ENCODE measurements at regions of chr2 and their contacts with region 1.

Region 1: GRCh38 chr2:98771721-98772524 is 41.0 kb upstream of the MGAT4A start:
- DNase-seq: peak; percentile 30 to 88 (median 80)
- H3K4me3 ChIP-seq: peak overlapping the region; percentile 54
- H3K4me3 Mint-ChIP-seq: peak overlapping the region; percentile 85 to 97 (median 93)
- H3K27ac ChIP-seq: peak overlapping the region; percentile 70
- H3K27ac Mint-ChIP-seq: peak overlapping the region; percentile 94 to 100 (median 98)
- H3K4me1 ChIP-seq: peaks cover 79% of the 10 kb centered on the region
- H3K4me1 Mint-ChIP-seq: peaks cover 73 to 90% (median 89%) of the 10 kb centered on the region in 3 donors
- H3K27me3 ChIP-seq: no peaks in the 10 kb centered on the region
- H3K27me3 Mint-ChIP-seq: peaks cover 0 to 2% of the 10 kb centered on the region in 2 donors

Region 2: DNA sequence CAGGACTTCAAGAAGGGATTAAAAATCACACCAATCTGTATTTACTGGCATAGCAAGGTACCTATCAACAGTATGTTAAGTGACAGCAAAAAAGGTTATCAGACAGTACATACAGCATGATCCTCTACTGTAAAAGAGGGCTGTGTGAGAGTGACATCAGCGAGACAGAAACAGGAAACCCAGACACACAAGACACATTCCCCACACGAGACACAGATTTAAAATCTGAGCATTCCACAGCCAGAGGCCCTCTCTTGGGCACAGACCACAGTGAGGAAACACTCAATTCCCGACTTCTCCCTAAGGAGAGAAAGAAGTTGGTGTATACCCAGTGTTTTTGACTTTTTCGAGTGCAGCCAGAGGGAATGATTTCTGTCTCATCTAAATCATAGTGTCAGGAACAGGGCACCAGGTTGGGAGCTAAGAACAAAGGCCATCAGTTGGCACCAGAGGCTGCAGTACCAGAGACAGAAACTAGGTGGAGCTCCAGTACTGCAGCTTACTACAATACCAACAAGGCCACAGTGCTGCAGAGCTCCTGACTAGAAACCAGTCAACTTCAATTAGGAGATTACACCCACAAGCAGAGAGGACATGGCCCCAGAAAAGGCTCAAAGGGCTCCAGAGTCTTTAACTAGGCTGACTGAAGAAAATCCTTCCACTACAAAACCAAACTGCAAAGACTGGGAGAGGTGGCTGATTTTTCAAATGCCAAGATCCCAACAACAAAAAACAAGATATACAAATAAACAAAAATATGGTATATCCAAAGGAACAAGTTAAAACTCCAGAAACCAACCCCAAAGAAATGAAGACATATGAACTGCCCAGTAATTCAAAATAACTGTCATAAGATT is 122.6 kb before region 1 on chr2:
- CTCF ChIA-PET with region 1: interaction called, 14 read pairs
- POLR2A ChIA-PET with region 1: interaction called, 8 read pairs
- DNase-seq: peak; percentile 70 to 82 (median 74)
- H3K4me3 ChIP-seq: no peak overlapping the region
- H3K4me3 Mint-ChIP-seq: peak overlapping the region; percentile 3 to 57 (median 12)
- H3K27ac ChIP-seq: no peak overlapping the region
- H3K27ac Mint-ChIP-seq: peak overlapping the region; percentile 55 to 98 (median 86)
- H3K4me1 ChIP-seq: peaks cover 44% of the 10 kb centered on the region
- H3K4me1 Mint-ChIP-seq: peaks cover 50 to 79% (median 57%) of the 10 kb centered on the region in 3 donors
- H3K27me3 ChIP-seq: no peaks in the 10 kb centered on the region
- H3K27me3 Mint-ChIP-seq: no peaks in the 10 kb centered on the region

Region 3: GRCh38 chr2:98664327-98664726 is 107.6 kb before region 1 on chr2:
- CTCF ChIA-PET with region 1: interaction called, 3 read pairs
- POLR2A ChIA-PET with region 1: interaction called, 19 read pairs
- DNase-seq: peak; percentile 17 to 82 (median 72)
- H3K4me3 ChIP-seq: peak overlapping the region; percentile 26
- H3K4me3 Mint-ChIP-seq: peak overlapping the region; percentile 79 to 94 (median 86)
- H3K27ac ChIP-seq: no peak overlapping the region
- H3K27ac Mint-ChIP-seq: peak overlapping the region; percentile 59 to 97 (median 91)
- H3K4me1 ChIP-seq: peaks cover 76% of the 10 kb centered on the region
- H3K4me1 Mint-ChIP-seq: peaks cover 64 to 90% (median 86%) of the 10 kb centered on the region in 3 donors
- H3K27me3 ChIP-seq: no peaks in the 10 kb centered on the region
- H3K27me3 Mint-ChIP-seq: no peaks in the 10 kb centered on the region

Region 4: DNA sequence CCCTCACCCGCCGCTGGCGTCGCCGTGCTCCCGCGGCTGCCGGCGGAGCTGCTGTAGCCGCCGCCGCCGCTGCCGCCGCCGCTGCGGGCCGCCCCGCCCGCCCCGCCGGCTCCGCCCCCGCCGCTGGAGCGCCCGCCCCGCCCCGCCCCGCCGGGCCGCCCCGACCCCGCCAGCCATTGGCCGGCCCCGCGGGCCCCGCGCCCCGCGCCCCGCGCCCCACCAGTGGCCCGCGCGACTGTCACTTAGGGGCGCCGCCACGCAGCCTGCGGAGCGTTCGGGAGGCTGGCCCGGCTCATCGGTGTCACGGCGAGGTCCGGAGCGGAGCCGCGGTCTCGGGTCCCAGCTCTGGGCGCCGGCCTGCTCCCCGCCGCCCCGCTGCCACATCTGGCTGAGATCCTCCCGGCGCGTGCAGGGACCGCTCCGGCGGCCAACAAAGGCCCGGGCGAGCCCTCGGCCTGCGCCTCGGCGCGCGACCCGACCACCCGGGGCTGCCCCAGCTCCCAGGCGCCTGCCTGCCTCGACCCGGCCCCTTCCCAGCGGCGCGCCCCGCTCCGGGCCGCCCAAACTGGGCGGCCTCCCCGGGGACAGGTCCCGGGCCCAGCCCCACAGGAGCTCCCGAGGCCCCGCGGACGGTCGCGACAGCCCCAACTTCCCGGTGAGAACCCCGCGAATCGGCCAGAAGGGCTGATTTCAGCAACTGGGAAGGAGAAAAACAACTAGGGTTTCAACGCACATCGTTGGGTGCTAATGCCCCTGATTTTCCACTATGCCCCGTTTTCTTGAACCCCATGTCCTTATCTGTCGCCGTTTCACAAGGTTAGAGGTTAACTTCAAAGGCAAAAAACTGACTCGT is 40.7 kb before region 1 on chr2 and contains the start of gene MGAT4A:
- CTCF ChIA-PET with region 1: interaction called, 33 read pairs
- POLR2A ChIA-PET with region 1: interaction called, 94 read pairs
- DNase-seq: peak; percentile 73 to 86 (median 81)
- H3K4me3 ChIP-seq: peak within 1 kb of the TSS; percentile 72
- H3K4me3 Mint-ChIP-seq: peak within 1 kb of the TSS; percentile 93 to 97 (median 95)
- H3K27ac ChIP-seq: peak within 1 kb of the TSS; percentile 81
- H3K27ac Mint-ChIP-seq: peak within 1 kb of the TSS; percentile 79 to 98 (median 95)
- H3K4me1 ChIP-seq: peaks cover 62% of the 10 kb centered on the region
- H3K4me1 Mint-ChIP-seq: peaks cover 64 to 76% (median 72%) of the 10 kb centered on the region in 3 donors
- H3K27me3 ChIP-seq: no peaks in the 10 kb centered on the region
- H3K27me3 Mint-ChIP-seq: no peaks in the 10 kb centered on the region
- total RNA-seq, gene MGAT4A: 65.2 to 66.8 TPM

Region 5: GRCh38 chr2:98743835-98744234 is 28.1 kb before region 1 on chr2:
- CTCF ChIA-PET with region 1: interaction called, 5 read pairs
- POLR2A ChIA-PET with region 1: interaction called, 11 read pairs
- DNase-seq: no peak
- H3K4me3 ChIP-seq: no peak overlapping the region
- H3K4me3 Mint-ChIP-seq: peak overlapping the region in 2 of 7 donors; percentile 15 to 16
- H3K27ac ChIP-seq: no peak overlapping the region
- H3K27ac Mint-ChIP-seq: peak overlapping the region in 4 of 8 donors; percentile 17 to 72 (median 54)
- H3K4me1 ChIP-seq: peaks cover 30% of the 10 kb centered on the region
- H3K4me1 Mint-ChIP-seq: peaks cover 36 to 76% (median 39%) of the 10 kb centered on the region in 3 donors
- H3K27me3 ChIP-seq: no peaks in the 10 kb centered on the region
- H3K27me3 Mint-ChIP-seq: no peaks in the 10 kb centered on the region

Region 6: GRCh38 chr2:98757904-98758421 is 14.0 kb before region 1 on chr2:
- CTCF ChIA-PET with region 1: interaction called, 23 read pairs
- POLR2A ChIA-PET with region 1: interaction called, 18 read pairs
- DNase-seq: peak; percentile 38 to 78 (median 66)
- H3K4me3 ChIP-seq: peak overlapping the region; percentile 51
- H3K4me3 Mint-ChIP-seq: peak overlapping the region; percentile 2 to 89 (median 79)
- H3K27ac ChIP-seq: peak overlapping the region; percentile 38
- H3K27ac Mint-ChIP-seq: peak overlapping the region; percentile 89 to 99 (median 96)
- H3K4me1 ChIP-seq: peaks cover 69% of the 10 kb centered on the region
- H3K4me1 Mint-ChIP-seq: peaks cover 54 to 89% (median 77%) of the 10 kb centered on the region in 3 donors
- H3K27me3 ChIP-seq: no peaks in the 10 kb centered on the region
- H3K27me3 Mint-ChIP-seq: no peaks in the 10 kb centered on the region

Region 7: DNA sequence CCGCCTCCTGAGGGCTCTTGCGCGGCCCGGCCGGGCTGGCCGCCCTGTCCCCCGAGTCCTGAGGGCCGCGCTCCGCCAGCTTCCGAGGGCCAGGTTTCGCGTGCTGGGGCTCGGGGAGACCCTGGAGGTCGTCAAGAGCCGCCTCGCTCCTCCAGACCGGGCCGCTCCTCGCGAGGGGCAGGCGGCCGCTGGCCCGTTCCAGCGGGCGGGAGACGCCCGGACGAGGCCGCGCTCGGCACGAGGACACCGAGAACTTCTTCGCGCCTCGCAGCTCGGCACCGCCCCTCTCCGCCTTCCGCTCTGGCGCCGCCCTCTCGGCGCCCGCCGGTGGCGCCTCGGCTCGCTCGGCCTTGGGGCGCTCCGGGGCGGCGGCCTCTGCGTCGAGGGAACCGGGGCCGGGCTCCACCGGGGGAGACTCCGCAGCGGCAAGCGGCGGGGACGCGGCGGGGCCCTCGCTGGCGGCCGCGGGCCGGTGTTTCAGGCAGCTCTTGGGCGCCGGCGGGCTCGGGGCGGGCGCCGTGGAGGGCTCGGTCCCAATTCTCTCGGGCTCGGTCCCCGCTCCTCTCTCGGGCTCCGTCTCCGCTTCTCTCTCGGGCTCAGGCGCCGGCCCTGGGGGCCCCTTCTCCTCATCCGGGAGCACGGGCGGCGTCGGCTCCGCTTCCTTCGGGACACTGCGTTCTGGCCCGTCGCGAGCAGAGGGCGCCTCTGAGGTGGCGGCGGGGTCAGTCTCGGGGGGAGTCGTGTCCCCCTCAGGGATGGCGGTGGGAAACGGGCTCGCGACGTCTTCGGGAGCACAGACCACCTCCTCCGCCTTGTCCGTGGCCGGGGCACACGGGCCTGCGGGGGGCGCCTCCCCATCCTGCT is 50.6 kb after region 1 on chr2:
- CTCF ChIA-PET with region 1: interaction called, 9 read pairs
- POLR2A ChIA-PET with region 1: interaction called, 12 read pairs
- DNase-seq: peak; percentile 39 to 71 (median 61)
- H3K4me3 ChIP-seq: no peak overlapping the region
- H3K4me3 Mint-ChIP-seq: peak overlapping the region in 3 of 7 donors; percentile 32 to 87 (median 41)
- H3K27ac ChIP-seq: no peak overlapping the region
- H3K27ac Mint-ChIP-seq: peak overlapping the region in 1 of 8 donors; percentile 33
- H3K4me1 ChIP-seq: peaks cover 5% of the 10 kb centered on the region
- H3K4me1 Mint-ChIP-seq: peaks cover 24 to 69% (median 39%) of the 10 kb centered on the region in 3 donors
- H3K27me3 ChIP-seq: no peaks in the 10 kb centered on the region
- H3K27me3 Mint-ChIP-seq: peaks cover 0 to 6% of the 10 kb centered on the region in 2 donors

Region 8: DNA sequence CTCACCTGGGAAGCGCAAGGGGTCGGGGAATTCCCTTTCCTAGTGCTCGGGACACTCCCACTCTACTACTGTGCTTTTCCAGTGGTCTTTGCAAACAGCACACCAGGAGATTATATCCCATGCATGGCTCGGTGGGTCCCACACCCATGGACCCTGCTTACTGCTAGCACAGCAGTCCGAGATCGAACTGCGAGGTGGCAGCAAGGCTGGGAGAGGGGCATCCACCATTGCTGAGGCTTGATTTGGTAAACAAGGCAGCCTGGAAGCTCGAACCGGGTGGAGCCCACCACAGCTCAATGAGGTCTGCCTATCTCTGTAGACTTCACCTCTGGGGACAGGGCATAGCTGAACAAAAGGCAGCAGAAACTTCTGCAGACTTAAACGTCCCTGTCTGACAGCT is 228.8 kb after region 1 on chr2:
- CTCF ChIA-PET with region 1: no interaction called
- POLR2A ChIA-PET with region 1: no interaction called
- DNase-seq: no peak
- H3K4me3 ChIP-seq: no peak overlapping the region
- H3K4me3 Mint-ChIP-seq: no peak overlapping the region
- H3K27ac ChIP-seq: no peak overlapping the region
- H3K27ac Mint-ChIP-seq: no peak overlapping the region
- H3K4me1 ChIP-seq: no peaks in the 10 kb centered on the region
- H3K4me1 Mint-ChIP-seq: no peaks in the 10 kb centered on the region
- H3K27me3 ChIP-seq: no peaks in the 10 kb centered on the region
- H3K27me3 Mint-ChIP-seq: peaks cover 10 to 14% of the 10 kb centered on the region in 2 donors

Measured in CD8-positive, alpha-beta memory T cell (primary cell).